ENCODE measurements at regions of chr4 and their contacts with region 1.

Region 1: DNA sequence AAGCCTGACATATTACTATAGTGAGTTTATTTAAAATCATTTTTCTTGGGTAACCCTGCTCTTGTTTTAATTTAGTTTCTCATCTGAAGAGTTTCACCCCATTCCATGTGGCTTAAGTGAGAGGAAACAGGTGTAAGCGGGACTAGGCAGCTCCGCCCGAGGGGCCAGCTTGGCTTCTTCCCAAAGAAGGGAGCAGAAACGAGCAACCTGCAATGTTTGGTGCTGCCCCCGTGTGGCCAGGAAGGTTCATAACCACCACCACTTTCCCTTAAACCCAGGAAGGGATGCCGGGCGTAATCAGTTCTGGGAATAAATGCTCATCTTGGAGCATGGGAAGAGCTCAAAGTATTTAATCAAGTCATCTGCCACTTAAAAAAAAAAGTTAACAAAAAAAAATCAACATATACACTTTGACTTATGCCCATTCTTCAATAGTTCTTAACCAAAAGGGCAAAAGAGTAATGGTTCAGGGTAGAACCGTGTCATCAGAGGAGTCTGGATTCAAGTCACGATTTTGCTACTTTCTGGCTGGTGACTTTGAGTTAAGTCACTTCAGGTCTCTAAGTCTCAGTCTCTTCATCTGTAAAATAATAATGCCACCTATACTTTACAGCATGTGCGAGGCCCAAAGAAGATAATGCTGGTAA is 147.9 kb downstream of the NSUN7 start:
- DNase-seq: peak; percentile 83 to 94
- ATAC-seq: peak; percentile 66
- H3K4me3 ChIP-seq: no peak overlapping the region
- H3K27ac ChIP-seq: peak overlapping the region in 1 of 2 donors; percentile 48
- H3K4me1 ChIP-seq: no peaks in the 10 kb centered on the region
- H3K27me3 ChIP-seq: no peaks in the 10 kb centered on the region

Region 2: GRCh38 chr4:40736910-40737309 is 160.8 kb before region 1 on chr4:
- intact Hi-C with region 1: loop called (anchors 5 kb)
- DNase-seq: no peak
- ATAC-seq: no peak
- H3K4me3 ChIP-seq: no peak overlapping the region
- H3K27ac ChIP-seq: no peak overlapping the region
- H3K4me1 ChIP-seq: no peaks in the 10 kb centered on the region
- H3K27me3 ChIP-seq: no peaks in the 10 kb centered on the region

Region 3: GRCh38 chr4:40744218-40744617 is 153.5 kb before region 1 on chr4:
- intact Hi-C with region 1: loop called (anchors 5 kb)
- DNase-seq: no peak
- ATAC-seq: no peak
- H3K4me3 ChIP-seq: no peak overlapping the region
- H3K27ac ChIP-seq: no peak overlapping the region
- H3K4me1 ChIP-seq: no peaks in the 10 kb centered on the region
- H3K27me3 ChIP-seq: no peaks in the 10 kb centered on the region

Region 4: GRCh38 chr4:40749717-40750460 is 147.8 kb before region 1 on chr4 and contains the start of gene NSUN7:
- intact Hi-C with region 1: loop called in 1 of 2 experiments (anchors 5 kb)
- DNase-seq: peak; percentile 78 to 87
- ATAC-seq: peak; percentile 87
- H3K4me3 ChIP-seq: peak within 1 kb of the TSS; percentile 43 to 94
- H3K27ac ChIP-seq: peak within 1 kb of the TSS in 1 of 2 donors; percentile 41
- H3K4me1 ChIP-seq: no peaks in the 10 kb centered on the region
- H3K27me3 ChIP-seq: no peaks in the 10 kb centered on the region
- total RNA-seq, gene NSUN7: 6.8 to 16.3 TPM

Region 5: GRCh38 chr4:40840985-40841571 is 56.6 kb before region 1 on chr4:
- intact Hi-C with region 1: loop called (anchors 2 kb)
- DNase-seq: peak; percentile 89 to 92
- ATAC-seq: no peak
- H3K4me3 ChIP-seq: no peak overlapping the region
- H3K27ac ChIP-seq: no peak overlapping the region
- H3K4me1 ChIP-seq: peaks cover 0 to 6% of the 10 kb centered on the region in 2 donors
- H3K27me3 ChIP-seq: no peaks in the 10 kb centered on the region

Region 6: DNA sequence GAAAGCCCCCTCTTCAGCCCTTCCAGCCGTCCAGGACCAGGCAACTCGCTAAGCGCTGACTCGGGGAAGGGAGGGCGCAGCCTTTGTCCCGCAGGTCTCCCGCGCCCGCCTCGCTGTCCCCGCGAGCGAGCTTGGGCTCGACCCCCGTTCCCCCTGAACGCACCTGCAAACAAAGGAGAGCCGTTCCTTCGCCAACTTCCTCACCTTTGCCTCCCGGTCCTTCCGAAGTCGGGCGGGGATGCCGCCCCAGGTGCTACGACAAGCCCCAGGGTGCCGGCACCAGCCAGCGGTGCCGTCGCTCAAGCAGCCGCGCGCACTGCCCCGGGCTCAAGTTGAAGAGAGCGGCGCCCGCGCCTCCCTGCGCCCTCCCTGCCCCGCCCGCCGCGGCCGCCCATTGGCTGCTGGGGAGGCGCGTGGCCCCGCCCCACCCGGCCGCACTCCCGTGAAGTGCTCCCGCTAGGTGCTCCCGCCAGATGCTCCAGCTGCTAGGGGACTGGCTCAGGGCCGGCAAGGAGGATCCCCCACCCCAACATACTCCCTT is 40.8 kb before region 1 on chr4:
- intact Hi-C with region 1: loop called (anchors 5 kb)
- DNase-seq: peak; percentile 79 to 93
- ATAC-seq: peak; percentile 91
- H3K4me3 ChIP-seq: peak overlapping the region in 1 of 2 donors; percentile 40
- H3K27ac ChIP-seq: no peak overlapping the region
- H3K4me1 ChIP-seq: no peaks in the 10 kb centered on the region
- H3K27me3 ChIP-seq: no peaks in the 10 kb centered on the region